Activated T-helper 1 cell treated with anti-CD3 and anti-CD28 coated beads, Interleukin-12 subunit alpha, Interleukin-12 subunit beta, Interleukin-2, Interleukin-4 antibody, amounts not matched to agents 30 ng/mL and 10 ng/mL and 1 ng/mL, durations not matched to agents 14 hours and 24 hours and 36 hours (primary cell): ENCODE measurements at regions of chr13 and their contacts with region 1.

Region 1: DNA sequence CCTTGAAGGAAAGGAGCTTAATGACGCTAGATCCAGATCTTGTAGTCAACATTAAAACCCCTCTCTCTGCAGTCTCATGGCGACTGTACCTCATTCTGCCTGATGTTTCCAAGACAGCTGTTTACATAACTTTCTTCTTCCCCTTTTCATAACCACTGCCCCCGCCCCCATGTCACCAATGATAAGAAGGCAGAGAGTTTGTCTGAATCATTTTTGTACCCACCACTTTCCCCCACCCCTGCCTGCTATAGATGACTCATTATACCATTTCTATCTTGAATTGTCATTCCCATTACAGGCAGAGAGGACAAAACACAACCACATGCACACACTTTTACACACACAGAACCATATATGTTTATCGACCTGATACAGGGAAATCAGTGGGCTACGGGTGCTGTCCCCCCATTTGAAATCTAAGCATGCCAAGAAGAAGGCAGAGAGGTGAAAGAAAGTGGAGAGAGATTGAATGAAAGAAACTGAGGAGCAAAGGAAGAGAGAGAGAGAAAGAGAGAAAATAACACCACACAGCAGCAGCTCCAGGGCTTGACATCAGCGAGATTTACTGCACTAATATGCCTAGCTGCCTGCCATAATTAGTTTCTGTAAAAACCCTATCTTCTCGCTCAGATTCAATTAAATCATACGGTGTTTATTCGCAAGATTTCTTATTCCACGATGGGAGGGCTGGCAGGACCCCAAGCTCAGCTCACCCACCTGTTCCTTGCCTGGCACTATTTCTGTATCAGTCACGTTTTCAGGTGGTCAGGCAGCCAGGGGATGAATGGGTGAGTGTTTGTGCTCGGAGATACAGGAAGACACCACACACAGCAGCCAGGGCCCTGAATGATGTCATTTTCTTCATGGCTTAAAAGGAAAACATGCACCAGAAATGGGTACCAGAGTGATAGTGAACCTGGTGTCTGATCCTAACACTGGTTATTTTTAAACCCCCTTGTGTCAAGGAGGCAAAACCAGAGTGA is 114.3 kb upstream of the SERP2 start:
- DNase-seq: peak; percentile 62
- H3K4me3 Mint-ChIP-seq: peak overlapping the region; percentile 75
- H3K27ac Mint-ChIP-seq: peak overlapping the region; percentile 83
- H3K4me1 Mint-ChIP-seq: peaks cover 14% of the 10 kb centered on the region
- H3K27me3 Mint-ChIP-seq: peaks cover 4% of the 10 kb centered on the region

Region 2: GRCh38 chr13:44141725-44142539 is 117.4 kb before region 1 on chr13:
- intact Hi-C with region 1: loop called (anchors 1 kb)
- DNase-seq: peak; percentile 94
- H3K4me3 Mint-ChIP-seq: peak overlapping the region; percentile 85
- H3K27ac Mint-ChIP-seq: peak overlapping the region; percentile 82
- H3K4me1 Mint-ChIP-seq: peaks cover 26% of the 10 kb centered on the region
- H3K27me3 Mint-ChIP-seq: peaks cover 41% of the 10 kb centered on the region

Region 3: GRCh38 chr13:44243198-44243857 is 16.0 kb before region 1 on chr13:
- intact Hi-C with region 1: loop called (anchors 1 kb)
- DNase-seq: no peak
- H3K4me3 Mint-ChIP-seq: no peak overlapping the region
- H3K27ac Mint-ChIP-seq: no peak overlapping the region
- H3K4me1 Mint-ChIP-seq: peaks cover 8% of the 10 kb centered on the region
- H3K27me3 Mint-ChIP-seq: peaks cover 22% of the 10 kb centered on the region

Region 4: DNA sequence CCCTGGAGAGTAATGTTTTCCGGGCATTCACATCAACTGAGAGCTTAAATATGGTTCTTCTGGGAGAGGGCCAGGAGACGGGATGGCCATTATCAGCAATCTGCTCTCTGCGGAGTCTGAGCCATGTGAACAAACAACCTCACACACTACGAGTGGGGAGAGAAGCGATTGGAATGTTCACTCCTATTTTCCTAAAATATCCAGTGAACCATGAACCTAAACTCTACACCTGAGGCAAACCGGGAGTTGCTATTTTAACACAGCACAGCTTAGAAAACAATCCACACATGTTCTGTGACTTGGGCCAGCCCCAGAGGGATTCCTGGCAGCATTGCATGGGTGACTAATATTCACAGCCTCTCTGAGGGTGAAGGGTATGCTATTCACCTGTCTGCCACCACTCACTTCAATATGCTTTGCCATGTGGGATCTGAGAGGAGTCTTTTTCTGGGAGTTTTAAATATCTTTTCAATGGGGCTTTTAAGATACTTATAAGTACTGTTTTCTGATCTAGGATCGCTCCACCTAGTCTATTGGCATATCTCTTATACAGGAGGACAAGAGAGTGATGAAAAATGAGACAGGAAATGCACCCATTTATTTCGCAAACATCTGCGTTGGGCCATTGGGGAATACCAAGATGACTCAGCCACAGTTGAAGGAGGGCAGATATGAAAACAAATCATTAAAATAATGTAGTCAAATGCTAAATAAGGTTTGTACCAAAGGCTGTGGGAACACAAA is 41.7 kb after region 1 on chr13:
- intact Hi-C with region 1: loop called (anchors 1 kb)
- DNase-seq: no peak
- H3K4me3 Mint-ChIP-seq: peak overlapping the region; percentile 5
- H3K27ac Mint-ChIP-seq: peak overlapping the region; percentile 27
- H3K4me1 Mint-ChIP-seq: peaks cover 51% of the 10 kb centered on the region
- H3K27me3 Mint-ChIP-seq: peaks cover 3% of the 10 kb centered on the region

Region 5: DNA sequence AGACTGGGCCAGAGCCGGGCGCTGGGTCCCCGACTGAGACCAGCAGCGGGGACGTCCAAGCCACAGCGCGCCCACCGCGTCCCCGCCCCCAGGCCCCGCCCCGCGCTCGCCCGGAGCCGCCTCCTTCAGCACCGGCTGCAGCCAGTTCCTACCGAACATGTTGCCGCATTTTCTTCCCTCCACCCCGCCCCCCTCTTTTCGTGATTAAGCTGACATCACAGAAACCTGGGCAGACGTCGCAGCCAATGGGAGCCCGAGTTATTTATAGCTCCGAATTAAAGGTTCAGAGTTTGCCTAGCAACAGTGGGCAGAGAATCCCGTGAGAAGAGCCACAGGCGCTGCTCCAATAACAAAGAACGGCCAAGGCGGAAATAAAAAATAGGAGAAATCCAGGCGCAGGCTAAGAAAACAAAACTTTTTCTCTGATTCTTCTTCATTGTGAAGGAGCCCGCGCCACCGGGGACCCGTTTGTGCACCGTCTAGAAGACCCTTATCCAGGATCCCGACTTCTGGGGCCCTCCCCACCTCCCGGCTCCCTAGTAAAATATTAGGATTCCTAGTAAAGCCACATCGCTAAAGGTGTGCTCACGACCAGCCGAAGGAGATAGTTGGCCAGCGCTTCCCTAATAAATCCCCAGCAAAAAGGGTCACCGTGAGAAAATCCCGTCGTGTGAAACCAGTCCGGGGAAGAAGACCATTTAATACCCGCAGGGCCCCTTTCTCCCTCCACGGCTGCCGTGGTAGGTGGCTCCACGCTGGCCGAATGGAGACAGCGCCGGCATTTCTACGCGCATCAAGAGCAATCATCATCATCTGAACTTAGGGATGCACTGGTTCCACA is 176.0 kb after region 1 on chr13:
- intact Hi-C with region 1: loop called (anchors 1 kb)
- DNase-seq: peak; percentile 70
- H3K4me3 Mint-ChIP-seq: peak overlapping the region; percentile 83
- H3K27ac Mint-ChIP-seq: peak overlapping the region; percentile 72
- H3K4me1 Mint-ChIP-seq: peaks cover 17% of the 10 kb centered on the region
- H3K27me3 Mint-ChIP-seq: peaks cover 47% of the 10 kb centered on the region